ENCODE measurements at regions of chr15 and their contacts with region 1.

Region 1: GRCh38 chr15:71476823-71477222 is 333.5 kb upstream of the NR2E3 start:
- DNase-seq: no peak

Region 2: GRCh38 chr15:72078887-72079286 is 602.1 kb after region 1 on chr15:
- intact Hi-C with region 1: no loop called
- DNase-seq: no peak

Region 3: DNA sequence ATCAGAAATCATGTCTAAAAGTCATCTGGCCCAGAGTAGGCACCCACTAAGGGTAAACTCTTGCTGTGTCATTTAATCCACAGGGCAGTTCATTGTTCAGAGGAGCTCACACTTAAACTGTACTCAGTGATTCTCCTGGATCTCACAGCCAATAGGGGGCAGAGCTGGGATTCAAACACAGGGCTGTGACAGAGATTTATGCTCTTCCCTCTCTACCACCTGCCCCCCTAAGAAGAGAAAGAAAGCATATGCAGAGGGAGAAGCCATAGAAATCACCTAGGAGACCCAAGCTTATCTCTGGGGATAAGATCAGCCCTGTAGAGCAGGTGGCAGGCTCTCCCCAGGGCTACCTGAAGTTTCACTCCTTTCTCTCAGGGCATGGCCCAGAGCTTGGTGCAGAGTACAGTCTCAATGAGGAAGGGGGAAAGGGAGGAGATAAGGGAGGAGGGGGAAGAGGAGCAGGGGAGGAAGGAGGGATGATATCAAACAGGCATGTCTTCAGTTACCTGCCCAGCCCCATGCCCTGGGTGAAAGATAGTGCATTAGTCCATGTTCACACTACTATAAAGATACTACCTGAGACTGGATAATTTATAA is 1358.6 kb after region 1 on chr15:
- intact Hi-C with region 1: loop called in 1 of 2 experiments (anchors 5 kb)
- DNase-seq: no peak

Measured in posterior vena cava (tissue), 2 donors.